ENCODE measurements at regions of chr16 and their contacts with region 1.

Region 1: GRCh38 chr16:68512183-68512582 is 26.9 kb upstream of the ZFP90 start:
- DNase-seq: no peak
- ATAC-seq: no peak
- H3K4me3 Mint-ChIP-seq: no peak overlapping the region
- H3K27ac Mint-ChIP-seq: no peak overlapping the region
- H3K4me1 Mint-ChIP-seq: peaks cover 12% of the 10 kb centered on the region
- H3K27me3 Mint-ChIP-seq: peaks cover 11% of the 10 kb centered on the region

Region 2: DNA sequence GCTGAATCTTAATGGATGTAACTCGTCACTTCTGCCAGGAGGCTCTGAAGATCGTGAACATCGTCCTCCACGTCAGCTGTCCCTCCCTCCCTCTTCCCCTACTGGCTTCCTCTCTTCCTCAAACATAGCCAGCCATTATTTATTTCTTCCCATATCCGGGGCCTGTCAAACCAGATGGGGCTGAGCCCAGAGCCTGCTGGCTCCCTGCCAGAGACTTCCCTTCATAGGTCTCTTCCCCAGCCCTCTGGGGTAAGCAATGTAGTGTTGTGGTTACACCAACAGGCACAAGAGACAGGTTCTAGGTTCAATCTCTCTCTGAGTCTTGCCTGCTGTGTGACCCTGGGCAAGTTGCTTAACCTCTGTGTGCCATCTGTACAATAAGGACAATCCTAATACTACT is 13.2 kb before region 1 on chr16:
- CTCF ChIA-PET with region 1: interaction called, 12 read pairs
- POLR2A ChIA-PET with region 1: no interaction called
- DNase-seq: no peak
- ATAC-seq: no peak
- H3K4me3 Mint-ChIP-seq: no peak overlapping the region
- H3K27ac Mint-ChIP-seq: no peak overlapping the region
- H3K4me1 Mint-ChIP-seq: peaks cover 4% of the 10 kb centered on the region
- H3K27me3 Mint-ChIP-seq: peaks cover 3% of the 10 kb centered on the region